Activated T-helper 1 cell treated with anti-CD3 and anti-CD28 coated beads, Interleukin-12 subunit alpha, Interleukin-12 subunit beta, Interleukin-2, Interleukin-4 antibody, amounts not matched to agents 30 ng/mL and 10 ng/mL and 1 ng/mL, durations not matched to agents 14 hours and 24 hours and 36 hours (primary cell): ENCODE measurements at regions of chr10 and their contacts with region 1.

Region 1: DNA sequence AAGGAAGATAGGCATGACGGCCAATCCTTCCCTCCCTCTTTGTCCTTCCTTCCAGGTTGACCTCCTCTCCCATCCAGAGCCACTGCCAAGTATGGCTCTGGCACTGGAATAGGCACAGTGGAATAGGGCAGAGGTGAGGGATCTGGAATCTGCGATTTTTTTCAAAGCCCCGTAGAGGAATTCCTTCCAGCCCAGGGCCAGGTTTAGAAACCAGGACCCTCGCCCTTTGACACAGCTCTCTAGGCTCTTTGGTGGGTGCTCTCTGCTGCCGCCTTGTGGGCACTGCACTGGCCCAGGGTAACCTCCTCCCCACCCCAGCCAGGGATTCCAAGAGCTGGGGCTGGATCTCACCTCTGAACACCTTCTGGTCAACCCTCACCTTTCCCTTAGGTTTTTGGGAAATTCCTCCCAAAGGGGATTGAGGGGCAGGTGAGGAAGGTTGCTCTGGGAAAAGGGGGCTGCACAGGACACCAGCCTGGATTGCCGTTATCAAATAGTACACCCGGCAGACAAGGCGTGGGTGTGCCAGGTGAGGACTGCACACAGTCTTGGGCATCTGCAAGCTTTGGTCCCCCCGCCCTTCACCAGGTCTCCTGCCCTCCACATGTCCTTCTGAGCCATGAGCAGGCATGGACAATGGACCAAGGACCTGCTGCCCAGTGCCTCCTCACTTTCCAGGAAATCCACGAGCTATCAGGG is 22.8 kb downstream of the C10orf105 start:
- DNase-seq: peak; percentile 41
- H3K4me3 Mint-ChIP-seq: no peak overlapping the region
- H3K27ac Mint-ChIP-seq: no peak overlapping the region
- H3K4me1 Mint-ChIP-seq: peaks cover 53% of the 10 kb centered on the region
- H3K27me3 Mint-ChIP-seq: no peaks in the 10 kb centered on the region

Region 2: GRCh38 chr10:71812016-71812912 is 115.5 kb after region 1 on chr10:
- intact Hi-C with region 1: loop called (anchors 2 kb)
- DNase-seq: peak; percentile 54
- H3K4me3 Mint-ChIP-seq: no peak overlapping the region
- H3K27ac Mint-ChIP-seq: no peak overlapping the region
- H3K4me1 Mint-ChIP-seq: no peaks in the 10 kb centered on the region
- H3K27me3 Mint-ChIP-seq: no peaks in the 10 kb centered on the region